Colonic mucosa (tissue), 4 donors: ENCODE measurements at regions of chr1 and their contacts with region 1.

Region 1: DNA sequence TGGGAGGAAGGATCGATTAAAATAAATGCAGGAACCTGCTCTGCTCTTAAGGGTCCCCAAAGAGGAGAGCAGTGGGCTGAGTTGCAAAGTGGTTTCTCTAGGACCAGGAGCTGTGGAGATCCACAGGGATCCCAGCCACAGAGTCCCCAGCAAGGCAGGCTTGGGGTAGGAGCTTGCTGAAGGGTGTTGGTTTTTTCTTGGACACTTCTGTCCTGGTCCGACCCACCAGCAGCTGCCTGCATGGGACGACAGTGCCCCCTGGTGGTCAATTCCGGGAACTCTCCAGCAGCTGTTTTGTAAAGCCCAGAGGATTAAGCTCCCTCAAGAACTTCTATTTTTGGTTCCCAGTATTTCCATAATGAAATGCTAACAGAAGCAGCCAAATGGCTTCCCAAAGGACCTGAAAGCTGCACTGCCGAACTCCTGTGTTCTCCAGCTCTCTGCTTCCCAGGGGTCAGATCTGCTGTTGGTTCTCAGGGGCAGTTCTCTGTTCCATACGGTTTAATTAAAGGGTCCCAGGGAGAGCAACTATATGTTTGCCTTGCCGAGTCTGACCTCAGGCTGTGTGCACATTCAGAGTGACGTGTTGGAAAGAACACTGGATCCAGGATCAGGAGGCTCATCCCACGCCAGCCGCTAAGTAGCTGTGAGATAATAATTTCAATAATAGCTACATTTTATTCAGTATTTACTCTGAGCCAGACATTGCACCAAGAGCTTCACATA is 23.2 kb downstream of the NENF start:
- DNase-seq: peak; percentile 90
- H3K4me3 ChIP-seq: no peak overlapping the region
- H3K27ac ChIP-seq: no peak overlapping the region
- H3K4me1 ChIP-seq: no peaks in the 10 kb centered on the region
- H3K27me3 ChIP-seq: no peaks in the 10 kb centered on the region
- CTCF ChIP-seq: peak; percentile 99

Region 2: DNA sequence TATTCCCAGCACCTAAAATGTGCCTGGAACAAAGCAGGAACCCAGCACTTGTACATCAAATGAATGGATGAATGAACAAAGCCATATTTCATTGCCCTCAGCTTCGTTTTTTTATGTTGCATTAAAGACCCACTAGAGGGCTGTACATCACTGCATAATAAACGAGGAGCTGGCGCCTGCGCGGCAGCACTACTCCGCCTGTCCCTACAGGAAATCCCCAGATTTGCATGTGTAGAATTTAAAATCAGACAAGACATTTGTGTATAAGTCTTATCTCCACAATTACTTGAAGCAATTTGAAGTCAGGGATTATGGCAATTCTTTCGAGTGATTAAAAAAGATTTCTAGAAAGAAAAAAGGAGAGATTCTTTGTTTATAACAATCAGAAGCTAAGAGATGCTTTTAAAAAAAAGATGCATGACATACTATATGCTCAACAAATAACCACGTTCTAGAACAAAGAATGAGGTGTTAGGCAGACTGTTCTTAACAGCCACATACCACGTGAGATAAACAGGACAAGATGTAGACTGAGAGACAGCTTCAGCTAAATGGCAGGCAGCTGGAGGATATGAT is 775.1 kb before region 1 on chr1:
- intact Hi-C with region 1: loop called (anchors 10 kb)
- DNase-seq: peak; percentile 59
- H3K4me3 ChIP-seq: no peak overlapping the region
- H3K27ac ChIP-seq: no peak overlapping the region
- H3K4me1 ChIP-seq: no peaks in the 10 kb centered on the region
- H3K27me3 ChIP-seq: no peaks in the 10 kb centered on the region
- CTCF ChIP-seq: peak; percentile 59

Region 3: GRCh38 chr1:212062832-212063438 is 393.0 kb before region 1 on chr1:
- intact Hi-C with region 1: loop called (anchors 5 kb)
- DNase-seq: no peak
- H3K4me3 ChIP-seq: no peak overlapping the region
- H3K27ac ChIP-seq: no peak overlapping the region
- H3K4me1 ChIP-seq: no peaks in the 10 kb centered on the region
- H3K27me3 ChIP-seq: no peaks in the 10 kb centered on the region
- CTCF ChIP-seq: peak; percentile 64

Region 4: DNA sequence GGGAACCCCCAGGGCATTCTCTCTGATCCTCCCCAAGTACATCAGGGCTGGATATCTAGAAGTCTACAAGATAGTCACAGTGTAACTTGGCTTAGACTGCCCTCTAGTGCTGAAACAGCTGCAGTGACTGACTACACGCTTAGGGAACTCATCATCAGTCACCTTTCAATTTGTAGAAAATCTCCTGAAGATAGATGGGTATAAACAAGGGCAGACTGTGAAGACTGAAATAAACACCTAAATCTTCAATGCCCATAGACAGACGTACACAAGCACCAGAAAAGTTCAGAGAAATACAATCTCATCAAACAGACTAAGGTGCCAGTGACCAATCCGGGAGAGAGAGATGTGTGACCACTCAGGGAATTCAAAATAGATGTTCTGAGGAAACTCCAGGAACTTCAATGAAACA is 87.9 kb before region 1 on chr1:
- intact Hi-C with region 1: loop called (anchors 5 kb)
- DNase-seq: peak; percentile 65
- H3K4me3 ChIP-seq: no peak overlapping the region
- H3K27ac ChIP-seq: no peak overlapping the region
- H3K4me1 ChIP-seq: no peaks in the 10 kb centered on the region
- H3K27me3 ChIP-seq: no peaks in the 10 kb centered on the region
- CTCF ChIP-seq: peak; percentile 83

Region 5: GRCh38 chr1:212782422-212783154 is 326.6 kb after region 1 on chr1:
- intact Hi-C with region 1: loop called (anchors 10 kb)
- DNase-seq: no peak
- H3K4me3 ChIP-seq: no peak overlapping the region
- H3K27ac ChIP-seq: no peak overlapping the region
- H3K4me1 ChIP-seq: no peaks in the 10 kb centered on the region
- H3K27me3 ChIP-seq: no peaks in the 10 kb centered on the region
- CTCF ChIP-seq: peak; percentile 62